Activated T-helper 2 cell treated with anti-CD3 and anti-CD28 coated beads, Interferon-gamma antibody, Interleukin-2, Interleukin-4, amounts not matched to agents 10 μg/mL and 5 μg/mL and 100 μg/mL, durations not matched to agents 14 hours and 24 hours and 36 hours (primary cell): ENCODE measurements at regions of chr3 and their contacts with region 1.

Region 1: DNA sequence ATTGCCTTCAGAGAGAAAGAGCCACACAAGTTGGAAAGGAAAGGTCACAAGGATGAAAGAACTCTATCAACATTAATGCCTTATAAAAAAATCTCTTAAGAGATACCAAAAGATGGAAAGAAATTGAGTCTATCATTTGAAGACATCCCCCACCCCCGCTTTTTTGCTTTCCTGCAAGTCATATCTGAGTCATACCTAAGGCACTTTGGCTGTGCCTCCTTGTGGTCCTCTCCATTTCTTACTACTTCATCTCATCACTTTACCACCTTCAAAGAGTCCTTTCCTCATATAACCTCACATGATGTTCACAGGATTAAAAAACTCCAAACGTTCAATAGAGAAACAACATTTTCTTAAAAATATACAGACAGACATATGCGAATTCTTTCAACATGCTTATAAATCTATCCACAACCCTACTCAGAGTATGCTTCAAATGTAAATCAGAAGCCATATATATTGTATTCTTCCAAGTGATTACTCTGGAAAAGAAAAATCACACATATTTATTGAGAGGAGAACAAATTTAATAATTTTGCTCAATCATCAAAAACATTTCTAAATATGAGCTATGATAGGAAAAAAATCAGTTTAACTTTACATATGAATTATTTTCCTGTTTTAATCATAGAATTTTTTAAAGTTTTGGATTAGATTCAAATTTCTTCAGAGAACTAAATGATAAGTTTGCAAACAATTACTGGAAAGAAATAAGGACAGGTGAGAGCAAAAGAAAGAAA is 1003.9 kb upstream of the CFAP20DC start:
- DNase-seq: no peak
- H3K4me3 Mint-ChIP-seq: peak overlapping the region; percentile 35
- H3K27ac Mint-ChIP-seq: peak overlapping the region; percentile 89
- H3K4me1 Mint-ChIP-seq: peaks cover 79% of the 10 kb centered on the region
- H3K27me3 Mint-ChIP-seq: no peaks in the 10 kb centered on the region

Region 2: DNA sequence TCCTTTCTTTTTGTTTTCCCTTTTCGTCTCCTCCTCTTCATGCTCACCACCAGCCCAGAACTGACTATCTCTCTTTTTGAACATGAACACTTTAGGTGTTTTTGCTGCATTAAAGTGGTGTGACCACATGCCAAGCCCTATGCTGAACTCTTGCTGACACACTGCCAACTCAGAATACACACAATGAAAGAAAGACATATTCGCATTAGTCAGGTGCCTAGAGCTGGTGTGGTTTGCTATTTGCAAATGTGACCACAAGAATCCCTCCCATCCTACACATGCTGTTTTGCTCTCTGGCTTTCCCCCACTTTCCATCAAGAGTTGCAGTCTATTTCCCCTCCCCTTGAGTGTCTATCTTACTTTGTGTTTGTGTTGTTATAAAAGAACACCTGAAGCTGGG is 36.1 kb before region 1 on chr3:
- intact Hi-C with region 1: loop called (anchors 1 kb)
- DNase-seq: peak; percentile 63
- H3K4me3 Mint-ChIP-seq: peak overlapping the region; percentile 61
- H3K27ac Mint-ChIP-seq: peak overlapping the region; percentile 98
- H3K4me1 Mint-ChIP-seq: peaks cover 64% of the 10 kb centered on the region
- H3K27me3 Mint-ChIP-seq: no peaks in the 10 kb centered on the region

Region 3: GRCh38 chr3:60064210-60065178 is 10.8 kb after region 1 on chr3:
- intact Hi-C with region 1: loop called (anchors 1 kb)
- DNase-seq: no peak
- H3K4me3 Mint-ChIP-seq: peak overlapping the region; percentile 34
- H3K27ac Mint-ChIP-seq: peak overlapping the region; percentile 89
- H3K4me1 Mint-ChIP-seq: peaks cover 70% of the 10 kb centered on the region
- H3K27me3 Mint-ChIP-seq: no peaks in the 10 kb centered on the region

Region 4: GRCh38 chr3:60250206-60250605 is 196.5 kb after region 1 on chr3:
- intact Hi-C with region 1: no loop called
- DNase-seq: no peak
- H3K4me3 Mint-ChIP-seq: no peak overlapping the region
- H3K27ac Mint-ChIP-seq: no peak overlapping the region
- H3K4me1 Mint-ChIP-seq: peaks cover 4% of the 10 kb centered on the region
- H3K27me3 Mint-ChIP-seq: no peaks in the 10 kb centered on the region